SK-N-SH (cell line): ENCODE measurements at regions of chr1 and their contacts with region 1.

Region 1: DNA sequence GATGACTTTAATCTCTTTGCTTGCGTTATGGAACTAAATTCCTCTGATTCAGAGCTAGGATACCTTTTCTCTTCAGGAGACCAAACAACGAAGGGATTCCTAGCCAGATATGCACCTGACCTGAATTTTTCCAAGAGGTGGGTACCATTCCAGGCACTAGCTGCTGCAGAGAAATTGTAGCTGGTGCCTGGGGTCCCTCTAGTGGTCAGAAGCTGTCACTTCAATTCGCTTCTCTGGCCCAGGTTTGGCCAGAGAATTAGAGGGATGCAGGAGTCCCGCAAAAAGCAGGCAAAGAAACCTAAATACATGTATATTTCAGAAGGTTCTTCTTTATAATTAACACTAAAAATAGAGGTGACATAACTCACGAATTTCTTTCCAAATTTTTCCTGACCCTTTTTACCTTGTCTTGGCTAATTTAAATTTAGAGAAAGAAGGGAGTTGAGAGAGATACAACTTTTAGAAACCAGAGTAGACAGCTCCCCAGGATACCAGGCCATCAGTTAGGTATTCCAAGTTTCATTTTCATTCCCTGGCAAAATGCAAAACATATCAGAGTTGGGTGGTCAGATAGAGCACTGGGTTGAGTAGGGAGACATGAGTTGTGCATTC is 9.6 kb downstream of the ACKR1 start:
- DNase-seq: peak; percentile 65
- H3K4me3 ChIP-seq: peak overlapping the region in 1 of 2 experiments; percentile 39; a peak in 1 of 4 replicates
- H3K27ac ChIP-seq: no peak overlapping the region
- H3K4me1 ChIP-seq: no peaks in the 10 kb centered on the region
- H3K27me3 ChIP-seq: peaks cover 15% of the 10 kb centered on the region; the same call in 1 of the 2 replicates
- CTCF ChIP-seq: peak; percentile 94
- EP300 ChIP-seq: no peak
- RAD21 ChIP-seq: peak; percentile 70

Region 2: GRCh38 chr1:158924677-158925076 is 289.6 kb before region 1 on chr1:
- CTCF ChIA-PET with region 1: no interaction called
- POLR2A ChIA-PET with region 1: no interaction called
- DNase-seq: no peak
- H3K4me3 ChIP-seq: no peak overlapping the region
- H3K27ac ChIP-seq: no peak overlapping the region
- H3K4me1 ChIP-seq: no peaks in the 10 kb centered on the region
- H3K27me3 ChIP-seq: no peaks in the 10 kb centered on the region
- CTCF ChIP-seq: no peak
- EP300 ChIP-seq: no peak
- RAD21 ChIP-seq: no peak

Region 3: GRCh38 chr1:159122005-159122621 is 92.1 kb before region 1 on chr1:
- CTCF ChIA-PET with region 1: interaction called, 14 read pairs
- POLR2A ChIA-PET with region 1: no interaction called
- DNase-seq: no peak
- H3K4me3 ChIP-seq: no peak overlapping the region
- H3K27ac ChIP-seq: no peak overlapping the region; a peak in 1 of 4 replicates
- H3K4me1 ChIP-seq: no peaks in the 10 kb centered on the region; a peak in 1 of 4 replicates
- H3K27me3 ChIP-seq: peaks cover 24% of the 10 kb centered on the region; the same call in 1 of the 2 replicates
- CTCF ChIP-seq: no peak
- EP300 ChIP-seq: no peak
- RAD21 ChIP-seq: no peak

Region 4: GRCh38 chr1:159161001-159161718 is 53.1 kb before region 1 on chr1:
- CTCF ChIA-PET with region 1: interaction called, 660 read pairs
- POLR2A ChIA-PET with region 1: no interaction called
- DNase-seq: peak; percentile 64
- H3K4me3 ChIP-seq: peak overlapping the region in 1 of 2 experiments; percentile 43; a peak in 1 of 4 replicates
- H3K27ac ChIP-seq: peak overlapping the region in 1 of 2 experiments; percentile 38; a peak in 1 of 4 replicates
- H3K4me1 ChIP-seq: peaks cover 0 to 12% of the 10 kb centered on the region in 2 experiments; a peak in 2 of 4 replicates
- H3K27me3 ChIP-seq: no peaks in the 10 kb centered on the region; the same call in 1 of the 2 replicates
- CTCF ChIP-seq: peak; percentile 100
- EP300 ChIP-seq: no peak
- RAD21 ChIP-seq: peak; percentile 100

Region 5: GRCh38 chr1:159197561-159198557 is 16.4 kb before region 1 on chr1:
- CTCF ChIA-PET with region 1: interaction called, 130 read pairs
- POLR2A ChIA-PET with region 1: no interaction called
- DNase-seq: peak; percentile 80
- H3K4me3 ChIP-seq: no peak overlapping the region; a peak in 1 of 4 replicates
- H3K27ac ChIP-seq: no peak overlapping the region
- H3K4me1 ChIP-seq: peaks cover 0 to 2% of the 10 kb centered on the region in 2 experiments; a peak in 1 of 4 replicates
- H3K27me3 ChIP-seq: peaks cover 5% of the 10 kb centered on the region; the same call in 1 of the 2 replicates
- CTCF ChIP-seq: peak; percentile 83
- EP300 ChIP-seq: no peak
- RAD21 ChIP-seq: peak; percentile 82

Region 6: DNA sequence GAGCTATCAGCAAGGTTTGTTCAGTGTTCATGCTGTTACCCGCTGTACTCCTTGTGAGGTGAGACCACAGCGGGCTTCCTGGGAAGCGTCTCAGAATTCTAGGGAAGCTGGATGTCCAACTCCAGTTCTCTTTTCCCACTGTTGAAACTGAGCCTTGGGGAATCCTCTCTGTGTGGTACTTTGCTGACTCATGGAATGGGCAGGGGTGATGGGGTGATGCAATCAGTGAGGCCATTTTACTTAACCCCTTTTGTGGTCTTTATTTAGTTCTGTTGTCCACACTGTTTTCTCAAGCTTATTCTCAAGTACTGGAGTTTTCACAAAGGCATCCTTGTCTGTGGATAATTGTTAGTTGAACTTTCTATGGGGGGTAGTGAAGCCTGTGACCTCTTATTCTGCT is 33.0 kb after region 1 on chr1:
- CTCF ChIA-PET with region 1: interaction called, 10 read pairs
- POLR2A ChIA-PET with region 1: interaction called, 3 read pairs
- DNase-seq: no peak
- H3K4me3 ChIP-seq: no peak overlapping the region
- H3K27ac ChIP-seq: no peak overlapping the region
- H3K4me1 ChIP-seq: no peaks in the 10 kb centered on the region
- H3K27me3 ChIP-seq: no peaks in the 10 kb centered on the region
- CTCF ChIP-seq: no peak
- EP300 ChIP-seq: no peak
- RAD21 ChIP-seq: no peak

Region 7: GRCh38 chr1:159279754-159280153 is 65.5 kb after region 1 on chr1:
- CTCF ChIA-PET with region 1: no interaction called
- POLR2A ChIA-PET with region 1: no interaction called
- DNase-seq: no peak
- H3K4me3 ChIP-seq: no peak overlapping the region
- H3K27ac ChIP-seq: no peak overlapping the region
- H3K4me1 ChIP-seq: no peaks in the 10 kb centered on the region
- H3K27me3 ChIP-seq: no peaks in the 10 kb centered on the region
- CTCF ChIP-seq: no peak
- EP300 ChIP-seq: no peak
- RAD21 ChIP-seq: no peak